CD4-positive, alpha-beta T cell (primary cell): ENCODE measurements at regions of chr2 and their contacts with region 1.

Region 1: GRCh38 chr2:6896930-6897759 is 19.6 kb downstream of the RSAD2 start:
- DNase-seq: peak in 3 of 14 experiments; percentile 63 to 72 (median 68)
- ATAC-seq: peak; percentile 49
- H3K4me3 ChIP-seq: no peak overlapping the region
- H3K4me3 Mint-ChIP-seq: no peak overlapping the region
- H3K27ac ChIP-seq: no peak overlapping the region
- H3K27ac Mint-ChIP-seq: peak overlapping the region; percentile 50
- H3K4me1 ChIP-seq: peaks cover 4% of the 10 kb centered on the region
- H3K4me1 Mint-ChIP-seq: peaks cover 19% of the 10 kb centered on the region
- H3K27me3 ChIP-seq: no peaks in the 10 kb centered on the region
- H3K27me3 Mint-ChIP-seq: no peaks in the 10 kb centered on the region
- CTCF ChIP-seq: peak; percentile 90

Region 2: GRCh38 chr2:6865346-6866274 is 31.5 kb before region 1 on chr2 and contains the start of gene CMPK2:
- CTCF ChIA-PET with region 1: interaction called, 10 read pairs
- POLR2A ChIA-PET with region 1: interaction called, 10 read pairs
- intact Hi-C with region 1: no loop called
- DNase-seq: peak; percentile 60 to 97 (median 74)
- ATAC-seq: peak; percentile 74
- H3K4me3 ChIP-seq: peak within 1 kb of the TSS; percentile 93
- H3K4me3 Mint-ChIP-seq: peak within 1 kb of the TSS; percentile 96
- H3K27ac ChIP-seq: peak within 1 kb of the TSS in 1 of 2 donors; percentile 46
- H3K27ac Mint-ChIP-seq: peak within 1 kb of the TSS; percentile 86
- H3K4me1 ChIP-seq: peaks cover 19% of the 10 kb centered on the region
- H3K4me1 Mint-ChIP-seq: peaks cover 20% of the 10 kb centered on the region
- H3K27me3 ChIP-seq: no peaks in the 10 kb centered on the region
- H3K27me3 Mint-ChIP-seq: no peaks in the 10 kb centered on the region
- CTCF ChIP-seq: no peak
- total RNA-seq, gene CMPK2: 6.5 to 7.6 TPM

Region 3: DNA sequence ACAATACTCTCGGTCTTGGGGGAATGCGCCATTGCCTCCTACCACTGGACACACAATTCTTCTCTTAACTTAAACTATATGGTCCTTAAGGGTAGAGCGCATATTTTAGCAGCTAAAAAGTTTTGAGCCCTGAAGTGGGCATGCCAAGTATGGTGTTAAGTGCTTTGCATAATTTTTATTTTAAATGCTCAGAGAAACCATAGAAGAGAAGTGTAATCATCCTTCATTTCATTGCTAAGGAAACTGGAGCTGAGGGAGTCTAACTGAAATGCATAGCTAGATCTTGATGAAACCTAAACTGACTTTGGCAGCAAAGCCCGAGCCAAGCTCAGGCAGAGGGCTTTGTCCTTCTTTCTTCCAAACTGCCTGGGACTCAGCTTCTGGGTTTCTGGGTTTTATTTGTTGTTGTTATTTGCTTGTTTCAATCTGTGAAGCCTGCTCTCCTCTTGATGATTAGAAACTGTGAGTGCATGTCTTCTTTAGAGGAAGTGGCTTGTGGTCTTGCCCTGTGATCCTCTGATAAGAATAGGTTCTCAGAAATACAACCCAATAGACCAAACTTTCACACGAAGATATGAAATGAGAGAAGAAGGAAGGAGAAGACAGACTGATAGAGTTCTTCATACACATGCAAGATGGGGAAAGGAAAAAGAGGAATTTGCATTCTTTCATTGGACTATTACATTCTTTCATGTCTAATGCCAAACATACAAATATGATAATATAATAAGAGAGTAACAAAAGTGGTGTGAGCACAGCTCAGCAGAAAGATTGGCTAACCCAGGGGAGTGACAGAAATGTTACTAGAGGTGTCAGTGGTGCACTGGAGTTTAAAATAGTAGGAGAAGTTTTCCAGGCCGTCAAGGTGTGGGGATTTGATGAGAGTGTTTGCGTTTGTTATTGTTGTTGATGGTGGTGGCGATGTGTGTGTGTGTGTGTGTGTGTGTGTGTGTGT is 12.6 kb after region 1 on chr2:
- CTCF ChIA-PET with region 1: interaction called, 41 read pairs
- POLR2A ChIA-PET with region 1: interaction called, 21 read pairs
- intact Hi-C with region 1: no loop called
- DNase-seq: peak in 6 of 14 experiments; percentile 15 to 90 (median 63)
- ATAC-seq: peak; percentile 64
- H3K4me3 ChIP-seq: peak overlapping the region; percentile 23
- H3K4me3 Mint-ChIP-seq: peak overlapping the region; percentile 62
- H3K27ac ChIP-seq: peak overlapping the region; percentile 38 to 63
- H3K27ac Mint-ChIP-seq: peak overlapping the region; percentile 85
- H3K4me1 ChIP-seq: peaks cover 82% of the 10 kb centered on the region
- H3K4me1 Mint-ChIP-seq: peaks cover 86% of the 10 kb centered on the region
- H3K27me3 ChIP-seq: no peaks in the 10 kb centered on the region
- H3K27me3 Mint-ChIP-seq: no peaks in the 10 kb centered on the region
- CTCF ChIP-seq: no peak

Region 4: DNA sequence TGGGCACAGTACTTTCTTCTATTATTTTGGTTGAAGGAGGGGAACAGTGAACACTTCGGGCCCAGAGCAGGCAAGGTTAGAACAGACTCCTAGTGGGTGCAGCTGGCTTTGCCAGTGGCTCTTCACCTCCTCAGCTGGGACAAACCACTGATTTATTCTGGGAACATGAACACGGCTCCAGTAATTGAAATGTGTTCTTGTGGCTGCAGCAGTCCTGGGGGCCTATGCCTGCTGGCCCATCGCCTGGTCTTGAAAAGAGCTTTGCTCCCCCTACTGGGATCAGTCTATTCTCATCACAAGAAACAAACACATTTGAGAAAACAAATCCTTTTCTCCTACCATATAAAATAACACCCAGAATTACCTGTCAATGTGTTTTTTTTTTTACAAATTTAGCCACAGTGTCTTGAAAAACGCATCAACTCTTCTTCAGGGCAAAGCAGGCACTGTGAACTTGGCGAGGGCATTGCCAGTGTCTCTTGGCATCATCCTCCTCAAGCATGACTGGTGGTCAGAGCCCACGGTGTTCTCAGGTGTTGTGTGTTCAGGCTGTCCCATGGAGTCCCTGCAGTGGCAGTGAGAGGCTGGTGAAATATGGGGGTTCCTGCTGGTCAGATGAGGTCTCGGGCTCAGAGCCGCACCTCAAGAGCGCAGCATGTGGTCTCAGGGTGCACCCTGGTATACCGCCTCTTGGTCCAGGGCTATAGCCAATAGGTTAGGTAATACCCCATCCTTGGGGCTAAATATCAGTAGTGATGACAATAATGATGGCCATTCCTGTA is 71.4 kb after region 1 on chr2:
- CTCF ChIA-PET with region 1: no interaction called
- POLR2A ChIA-PET with region 1: no interaction called
- intact Hi-C with region 1: loop called (anchors 2 to 5 kb)
- DNase-seq: peak in 2 of 14 experiments; percentile 7 to 14
- ATAC-seq: no peak
- H3K4me3 ChIP-seq: no peak overlapping the region
- H3K4me3 Mint-ChIP-seq: no peak overlapping the region
- H3K27ac ChIP-seq: no peak overlapping the region
- H3K27ac Mint-ChIP-seq: no peak overlapping the region
- H3K4me1 ChIP-seq: no peaks in the 10 kb centered on the region
- H3K4me1 Mint-ChIP-seq: peaks cover 37% of the 10 kb centered on the region
- H3K27me3 ChIP-seq: no peaks in the 10 kb centered on the region
- H3K27me3 Mint-ChIP-seq: no peaks in the 10 kb centered on the region
- CTCF ChIP-seq: no peak

Region 5: GRCh38 chr2:7031547-7032245 is 134.6 kb after region 1 on chr2:
- CTCF ChIA-PET with region 1: interaction called, 6 read pairs
- POLR2A ChIA-PET with region 1: interaction called, 7 read pairs
- intact Hi-C with region 1: loop called in 1 of 2 experiments (anchors 5 kb)
- DNase-seq: peak; percentile 45 to 91 (median 61)
- ATAC-seq: peak; percentile 98
- H3K4me3 ChIP-seq: no peak overlapping the region
- H3K4me3 Mint-ChIP-seq: no peak overlapping the region
- H3K27ac ChIP-seq: no peak overlapping the region
- H3K27ac Mint-ChIP-seq: peak overlapping the region; percentile 89
- H3K4me1 ChIP-seq: peaks cover 17% of the 10 kb centered on the region
- H3K4me1 Mint-ChIP-seq: peaks cover 16% of the 10 kb centered on the region
- H3K27me3 ChIP-seq: no peaks in the 10 kb centered on the region
- H3K27me3 Mint-ChIP-seq: no peaks in the 10 kb centered on the region
- CTCF ChIP-seq: peak; percentile 28

Region 6: DNA sequence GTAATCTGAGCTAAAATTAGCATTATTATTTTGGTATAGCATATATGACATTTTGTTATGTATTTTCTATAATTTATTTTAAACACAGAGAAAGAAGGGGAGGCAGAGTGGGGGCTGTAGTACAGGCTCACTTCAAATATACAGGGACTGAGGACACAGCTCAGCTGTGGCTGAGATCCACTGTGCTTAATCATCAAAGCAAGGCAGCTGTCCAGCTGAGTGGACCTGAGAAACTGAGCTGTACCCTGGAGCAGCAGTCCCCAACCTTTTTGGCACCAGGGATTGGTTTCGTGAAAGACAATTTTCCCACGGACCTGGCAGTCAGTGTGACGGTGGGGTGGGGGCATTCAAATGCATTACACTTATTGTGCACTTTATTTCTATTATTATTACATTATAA is 707.3 kb after region 1 on chr2:
- CTCF ChIA-PET with region 1: no interaction called
- POLR2A ChIA-PET with region 1: no interaction called
- intact Hi-C with region 1: no loop called
- DNase-seq: no peak
- ATAC-seq: no peak
- H3K4me3 ChIP-seq: no peak overlapping the region
- H3K4me3 Mint-ChIP-seq: no peak overlapping the region
- H3K27ac ChIP-seq: no peak overlapping the region
- H3K27ac Mint-ChIP-seq: no peak overlapping the region
- H3K4me1 ChIP-seq: no peaks in the 10 kb centered on the region
- H3K4me1 Mint-ChIP-seq: no peaks in the 10 kb centered on the region
- H3K27me3 ChIP-seq: no peaks in the 10 kb centered on the region
- H3K27me3 Mint-ChIP-seq: no peaks in the 10 kb centered on the region
- CTCF ChIP-seq: no peak